ENCODE measurements at regions of chr1 and their contacts with region 1.

Region 1: GRCh38 chr1:228004331-228004855 is 2.4 kb upstream of the WNT3A start:
- DNase-seq: peak; percentile 63 to 75 (median 66)
- ATAC-seq: peak; percentile 94
- H3K4me3 ChIP-seq: no peak overlapping the region
- H3K27ac ChIP-seq: no peak overlapping the region
- H3K4me1 ChIP-seq: peaks cover 0 to 39% of the 10 kb centered on the region in 2 experiments; a peak in 2 of 5 replicates
- H3K27me3 ChIP-seq: peaks cover 34 to 79% of the 10 kb centered on the region in 2 experiments
- CTCF ChIP-seq: peak; percentile 72 to 80 (median 78)
- EP300 ChIP-seq: no peak
- POLR2A ChIP-seq: no peak
- RAD21 ChIP-seq: peak in 1 of 2 experiments; percentile 67; a peak in 2 of 4 replicates

Region 2: GRCh38 chr1:227632325-227632724 is 372.1 kb before region 1 on chr1:
- CTCF ChIA-PET with region 1: no interaction called
- POLR2A ChIA-PET with region 1: no interaction called
- in situ Hi-C with region 1: no loop called
- intact Hi-C with region 1: no loop called
- DNase-seq: no peak
- ATAC-seq: no peak
- H3K4me3 ChIP-seq: no peak overlapping the region
- H3K27ac ChIP-seq: no peak overlapping the region
- H3K4me1 ChIP-seq: no peaks in the 10 kb centered on the region
- H3K27me3 ChIP-seq: no peaks in the 10 kb centered on the region
- CTCF ChIP-seq: no peak
- EP300 ChIP-seq: no peak
- POLR2A ChIP-seq: no peak
- RAD21 ChIP-seq: no peak

Region 3: DNA sequence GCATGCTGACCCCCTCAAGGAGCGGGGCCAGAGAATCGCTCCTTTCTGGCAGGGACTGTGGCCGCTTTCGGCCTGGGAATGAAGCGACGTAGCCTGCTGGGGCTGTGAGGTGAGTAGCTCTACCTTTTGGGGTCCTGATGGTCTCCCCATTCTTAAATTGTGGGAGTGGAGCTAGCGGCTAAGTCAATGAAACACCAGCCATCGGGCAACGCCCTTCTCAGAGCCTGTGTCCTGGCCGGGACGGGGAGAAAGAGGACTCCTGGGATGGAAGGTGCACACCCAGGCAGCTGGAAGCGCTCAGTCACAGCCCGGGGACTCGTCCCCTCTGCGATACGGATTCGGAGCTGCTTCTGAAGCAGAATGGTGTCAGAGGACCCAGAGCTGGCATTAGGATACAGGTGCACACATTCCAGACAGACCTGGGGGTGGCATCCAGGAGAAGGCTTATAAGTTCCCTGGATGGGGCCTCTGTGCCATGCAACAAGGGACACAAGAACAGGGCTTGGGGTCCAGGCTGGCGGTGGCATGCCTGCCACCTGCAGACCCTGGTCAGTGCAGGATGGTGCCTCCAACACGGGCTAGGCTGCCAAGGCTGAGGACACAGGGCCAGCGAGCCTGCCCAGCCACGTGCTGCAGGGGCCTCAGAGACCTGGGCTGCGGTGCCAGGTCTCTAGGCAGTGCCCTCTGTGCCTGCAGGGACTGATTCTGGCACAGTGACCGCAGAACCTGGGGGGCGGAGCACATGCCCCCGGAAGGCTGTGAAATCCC is 55.7 kb before region 1 on chr1:
- CTCF ChIA-PET with region 1: no interaction called
- POLR2A ChIA-PET with region 1: no interaction called
- in situ Hi-C with region 1: no loop called
- intact Hi-C with region 1: no loop called
- DNase-seq: peak in 1 of 4 experiments; percentile 17
- ATAC-seq: no peak
- H3K4me3 ChIP-seq: peak overlapping the region; percentile 40; the same call in 1 of the 2 replicates
- H3K27ac ChIP-seq: no peak overlapping the region
- H3K4me1 ChIP-seq: peaks cover 2 to 51% of the 10 kb centered on the region in 2 experiments; a peak in 4 of 5 replicates
- H3K27me3 ChIP-seq: peaks cover 16 to 81% of the 10 kb centered on the region in 2 experiments
- CTCF ChIP-seq: no peak
- EP300 ChIP-seq: no peak
- POLR2A ChIP-seq: no peak
- RAD21 ChIP-seq: no peak

Region 4: GRCh38 chr1:228073857-228074545 is 69.6 kb after region 1 on chr1:
- CTCF ChIA-PET with region 1: interaction called, 4 read pairs
- POLR2A ChIA-PET with region 1: interaction called, 3 read pairs
- in situ Hi-C with region 1: no loop called
- intact Hi-C with region 1: loop called (anchors 1 kb)
- DNase-seq: peak; percentile 61 to 69 (median 62)
- ATAC-seq: peak; percentile 77
- H3K4me3 ChIP-seq: no peak overlapping the region
- H3K27ac ChIP-seq: no peak overlapping the region
- H3K4me1 ChIP-seq: peaks cover 0 to 29% of the 10 kb centered on the region in 2 experiments; a peak in 2 of 5 replicates
- H3K27me3 ChIP-seq: peaks cover 0 to 24% of the 10 kb centered on the region in 2 experiments; a peak in 3 of 5 replicates
- CTCF ChIP-seq: peak; percentile 69 to 77 (median 72)
- EP300 ChIP-seq: no peak
- POLR2A ChIP-seq: no peak
- RAD21 ChIP-seq: peak; percentile 38 to 71; a peak in 3 of 4 replicates

Measured in K562 (cell line).